GM13977 (cell line): ENCODE measurements at regions of chr10 and their contacts with region 1.

Region 1: GRCh38 chr10:48215488-48216204 is 58.9 kb downstream of the FRMPD2 start:
- DNase-seq: peak; percentile 51
- CTCF ChIP-seq: peak; percentile 79

Region 2: DNA sequence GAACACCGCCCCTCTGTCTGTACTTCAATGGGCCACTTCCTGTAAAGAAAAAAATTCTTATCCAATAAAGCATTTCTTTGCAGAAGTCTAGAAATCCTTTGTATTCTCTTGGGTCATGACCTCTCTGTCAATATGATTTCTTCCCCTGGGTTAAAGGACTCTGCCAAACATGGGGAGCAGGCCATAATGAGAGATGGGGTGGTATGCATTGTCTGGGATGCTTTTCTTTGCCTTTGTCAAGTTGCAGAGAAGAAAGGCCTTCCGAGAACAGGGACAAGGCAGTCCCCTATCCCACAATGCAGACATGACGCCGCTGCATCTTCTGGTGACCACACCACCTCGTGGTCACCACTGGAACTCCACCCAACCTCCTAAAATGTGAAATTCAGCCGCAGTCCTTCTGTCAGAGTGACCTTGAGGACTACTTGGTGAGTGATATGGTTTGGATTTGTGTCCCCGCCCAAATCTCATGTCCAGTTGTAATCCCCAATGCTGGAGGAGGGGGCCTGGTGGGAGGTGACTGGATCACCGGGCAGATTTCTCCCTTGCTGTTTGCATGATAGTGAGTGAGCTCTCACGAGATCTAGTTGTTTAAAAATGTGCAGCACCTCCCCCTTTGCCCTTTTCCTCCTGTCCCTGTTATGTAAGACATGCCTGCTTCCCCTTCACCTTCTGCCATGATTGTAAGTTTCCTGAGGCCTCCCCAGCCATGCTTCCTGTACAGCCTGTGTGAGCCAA is 74.0 kb after region 1 on chr10:
- in situ Hi-C with region 1: loop called (anchors 10 kb)
- DNase-seq: peak; percentile 40
- CTCF ChIP-seq: peak; percentile 86